Dendritic cell treated with granulocyte-macrophage colony-stimulating factor and Interleukin-4, amounts not matched to agents 40 ng/mL and 50 ng/mL, for 4 days (primary cell): ENCODE measurements at regions of chrX and their contacts with region 1.

Region 1: DNA sequence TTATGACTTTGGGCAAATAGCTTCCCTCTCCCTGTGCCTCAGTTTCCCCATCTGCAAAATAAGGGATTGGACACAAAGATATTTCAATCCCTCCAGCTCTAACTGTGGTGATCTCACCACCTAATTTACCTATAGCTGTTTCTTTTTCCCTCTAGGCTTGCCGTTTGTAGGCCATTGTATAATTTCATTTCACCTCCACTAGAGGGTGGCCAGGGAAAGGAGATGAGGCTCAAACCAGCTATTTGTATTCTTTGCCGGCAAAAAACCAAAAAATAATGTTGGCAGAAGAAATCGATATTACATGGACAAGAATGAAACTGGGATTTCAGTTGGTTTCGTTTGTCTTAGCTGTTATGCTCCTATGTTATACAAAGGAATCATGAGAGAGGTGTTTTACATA is 36.1 kb upstream of the DOCK11 start:
- H3K4me3 Mint-ChIP-seq: no peak overlapping the region
- H3K27ac Mint-ChIP-seq: no peak overlapping the region
- H3K4me1 Mint-ChIP-seq: peaks cover 4% of the 10 kb centered on the region
- H3K27me3 Mint-ChIP-seq: no peaks in the 10 kb centered on the region

Region 2: DNA sequence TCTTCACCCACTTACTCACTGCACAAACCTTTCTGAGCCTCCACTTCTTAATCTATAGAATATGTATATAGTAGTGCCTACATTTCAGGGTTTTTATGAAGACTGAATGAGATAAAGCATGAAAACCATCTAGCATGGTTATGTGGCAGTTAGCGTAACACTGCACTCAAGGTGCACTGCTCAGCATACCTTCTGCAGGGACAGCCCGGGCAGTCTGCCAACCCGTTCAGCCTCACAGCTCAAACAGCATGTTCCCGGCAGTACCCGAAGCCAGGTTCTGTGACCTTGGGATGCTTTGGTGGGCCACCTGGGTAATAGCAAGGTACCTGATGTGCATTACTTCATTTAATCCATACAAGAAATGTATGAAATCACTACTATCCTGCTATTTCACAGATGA is 117.5 kb after region 1 on chrX:
- intact Hi-C with region 1: loop called (anchors 10 kb)
- H3K4me3 Mint-ChIP-seq: no peak overlapping the region
- H3K27ac Mint-ChIP-seq: no peak overlapping the region
- H3K4me1 Mint-ChIP-seq: no peaks in the 10 kb centered on the region
- H3K27me3 Mint-ChIP-seq: no peaks in the 10 kb centered on the region

Region 3: GRCh38 chrX:118603981-118604380 is 144.5 kb after region 1 on chrX:
- intact Hi-C with region 1: loop called (anchors 5 kb)
- H3K4me3 Mint-ChIP-seq: no peak overlapping the region
- H3K27ac Mint-ChIP-seq: no peak overlapping the region
- H3K4me1 Mint-ChIP-seq: peaks cover 5% of the 10 kb centered on the region
- H3K27me3 Mint-ChIP-seq: no peaks in the 10 kb centered on the region

Region 4: DNA sequence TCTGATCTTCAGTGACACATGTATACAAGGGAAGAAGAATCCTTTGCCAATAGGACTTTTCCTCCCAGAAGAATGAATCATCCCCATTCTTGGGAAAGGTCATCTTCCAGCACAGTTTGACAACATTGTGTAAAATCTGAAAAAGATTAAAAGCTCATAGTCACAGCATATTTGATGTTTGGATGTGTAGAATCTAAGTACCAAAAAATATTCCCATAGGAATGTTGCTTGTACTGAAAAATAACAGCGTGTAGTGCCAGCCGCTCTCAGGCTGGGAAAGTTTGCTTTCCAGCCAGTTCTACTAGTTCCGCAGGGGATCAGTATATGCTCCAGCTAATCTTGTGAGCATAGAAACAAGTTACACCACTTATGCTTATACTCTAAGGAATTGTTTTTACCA is 193.2 kb after region 1 on chrX:
- intact Hi-C with region 1: no loop called
- H3K4me3 Mint-ChIP-seq: no peak overlapping the region
- H3K27ac Mint-ChIP-seq: no peak overlapping the region
- H3K4me1 Mint-ChIP-seq: peaks cover 5% of the 10 kb centered on the region
- H3K27me3 Mint-ChIP-seq: no peaks in the 10 kb centered on the region